ENCODE measurements at regions of chr16 and their contacts with region 1.

Region 1: DNA sequence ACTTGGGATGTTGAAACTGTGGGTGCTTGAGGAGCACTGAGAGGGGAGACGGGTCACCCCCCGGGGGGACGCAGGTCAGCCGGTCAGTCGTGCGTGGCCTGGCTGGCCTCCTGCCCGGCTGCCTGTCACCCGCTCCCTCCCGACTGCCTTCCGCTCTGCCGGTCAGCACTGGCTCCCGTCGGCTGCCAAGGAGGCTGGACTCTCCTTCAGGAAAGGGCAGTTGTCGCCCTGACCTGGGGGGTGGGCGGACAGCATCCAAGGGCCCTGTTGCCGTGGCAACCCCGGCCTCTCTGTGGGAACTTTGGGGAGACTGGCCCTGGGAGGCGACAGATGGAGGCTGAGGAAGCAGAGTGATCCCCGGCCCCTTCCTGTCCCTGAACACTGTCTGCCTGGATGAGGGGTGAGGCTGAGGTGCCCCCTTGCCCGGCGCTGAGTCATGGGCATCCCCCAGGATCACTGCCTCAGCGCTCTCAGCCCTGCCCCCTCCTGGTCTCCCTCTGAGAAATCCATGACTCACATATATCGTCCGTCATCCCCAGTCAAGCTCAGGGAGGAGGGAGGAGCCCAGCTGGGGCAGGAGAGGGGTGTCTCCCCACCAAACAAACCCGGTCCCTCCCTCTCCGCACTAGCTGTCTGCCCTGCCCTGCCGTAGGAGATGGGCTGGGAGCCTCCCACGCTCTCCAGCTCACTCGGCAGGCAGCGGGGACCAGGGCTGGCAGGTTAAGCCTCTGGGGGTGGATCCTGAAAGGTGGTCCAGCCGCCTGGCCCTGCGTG is at the start of gene ADGRG1:
- DNase-seq: peak; percentile 93 to 98 (median 98)
- H3K4me3 ChIP-seq: peak within 1 kb of the TSS; percentile 65 to 86 (median 81)
- H3K27ac ChIP-seq: peak within 1 kb of the TSS; percentile 68 to 83
- H3K4me1 ChIP-seq: peaks cover 3 to 90% (median 84%) of the 10 kb centered on the region in 4 experiments
- H3K27me3 ChIP-seq: no peaks in the 10 kb centered on the region

Region 2: GRCh38 chr16:57591086-57591869 is 36.9 kb before region 1 on chr16:
- CTCF ChIA-PET with region 1: interaction called, 55 read pairs
- POLR2A ChIA-PET with region 1: no interaction called
- DNase-seq: peak; percentile 73 to 85 (median 81)
- H3K4me3 ChIP-seq: peak overlapping the region in 1 of 7 experiments; percentile 14
- H3K27ac ChIP-seq: no peak overlapping the region
- H3K4me1 ChIP-seq: peaks cover 10 to 37% (median 34%) of the 10 kb centered on the region in 4 experiments
- H3K27me3 ChIP-seq: no peaks in the 10 kb centered on the region

Region 3: DNA sequence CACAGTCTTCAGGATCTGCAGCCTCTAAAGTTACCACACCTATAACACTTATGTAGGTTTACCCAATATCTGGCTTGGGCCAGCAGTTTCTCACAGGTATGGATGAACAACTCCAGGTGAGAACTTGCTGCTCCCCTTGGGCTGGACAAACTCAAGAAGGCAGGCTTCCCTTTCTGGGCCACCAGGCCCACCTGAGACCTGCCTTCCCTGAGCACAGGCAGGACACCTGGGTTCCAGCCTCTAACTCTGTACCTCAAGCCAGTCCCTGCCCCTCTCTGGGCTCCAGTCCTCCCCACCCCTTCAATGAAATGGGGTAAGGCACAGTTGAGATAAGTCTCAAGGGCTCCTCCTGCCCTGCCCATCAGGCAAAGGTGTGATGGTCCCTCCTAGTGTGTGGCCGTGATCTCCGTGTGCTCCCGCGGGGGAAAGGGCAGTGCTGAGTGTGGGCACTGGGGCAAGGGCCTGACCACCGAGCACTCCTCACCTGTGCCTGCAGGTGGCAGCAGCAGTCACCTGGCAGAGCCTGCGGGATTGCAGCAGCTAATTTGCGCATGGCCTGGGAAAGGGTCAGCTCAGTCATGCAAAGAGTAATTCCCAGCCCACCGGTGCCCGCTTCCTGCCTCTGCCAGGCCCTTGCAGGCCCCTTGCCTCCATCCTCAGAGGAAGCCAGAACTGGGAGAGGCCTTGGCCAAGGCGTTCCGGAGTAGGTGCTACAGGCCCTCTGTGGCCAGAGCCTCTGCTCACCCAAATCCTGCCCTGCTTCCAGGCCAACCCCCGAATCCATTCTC is 28.0 kb before region 1 on chr16:
- CTCF ChIA-PET with region 1: interaction called, 108 read pairs
- POLR2A ChIA-PET with region 1: interaction called, 5 read pairs
- DNase-seq: peak in 1 of 3 donors; percentile 48
- H3K4me3 ChIP-seq: no peak overlapping the region
- H3K27ac ChIP-seq: no peak overlapping the region
- H3K4me1 ChIP-seq: peaks cover 19 to 54% (median 50%) of the 10 kb centered on the region in 4 experiments
- H3K27me3 ChIP-seq: no peaks in the 10 kb centered on the region

Region 4: DNA sequence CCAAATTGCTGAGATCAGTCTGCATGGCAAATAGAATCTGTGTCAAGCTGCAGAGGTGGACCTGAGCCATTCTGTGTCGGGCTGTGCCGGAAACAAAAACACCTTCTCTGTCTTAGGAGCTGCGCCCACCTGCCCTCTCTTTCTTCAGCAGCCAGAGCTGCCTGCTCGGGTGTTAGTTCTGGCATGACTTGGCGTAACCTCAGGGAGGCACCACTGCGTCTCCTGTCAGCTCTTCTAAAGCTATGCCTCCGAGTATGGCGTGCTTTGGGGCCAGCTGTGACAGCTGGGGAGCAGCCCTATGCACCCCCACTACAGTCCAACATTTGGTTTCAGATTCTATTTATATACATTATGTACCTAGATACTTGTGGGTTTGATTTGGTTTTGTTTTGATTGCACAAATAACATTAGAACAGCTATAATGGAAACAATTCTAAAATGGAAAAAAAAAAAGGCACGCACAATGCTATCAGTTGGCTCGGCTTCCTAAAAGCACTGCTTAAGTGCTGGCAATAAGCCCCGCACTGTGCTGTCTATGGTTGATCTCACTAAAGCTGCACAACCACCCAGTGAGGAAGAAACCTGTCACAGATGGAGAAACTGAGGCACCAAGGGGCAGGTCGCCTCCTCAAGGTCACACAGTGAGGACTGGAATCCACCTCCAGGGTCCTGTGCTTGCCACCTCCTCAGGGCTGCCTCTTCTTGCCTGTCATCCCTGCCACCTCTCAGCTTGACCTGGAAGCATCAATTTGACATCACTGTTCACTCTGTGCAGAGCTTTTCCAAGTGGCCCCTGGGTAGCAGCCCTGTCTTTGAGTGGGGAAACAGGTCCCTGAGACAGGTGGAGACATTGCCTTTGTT is 18.4 kb before region 1 on chr16:
- CTCF ChIA-PET with region 1: interaction called, 108 read pairs
- POLR2A ChIA-PET with region 1: interaction called, 3 read pairs
- DNase-seq: peak in 2 of 3 donors; percentile 86 to 89
- H3K4me3 ChIP-seq: peak overlapping the region in 2 of 7 experiments; percentile 19 to 25
- H3K27ac ChIP-seq: no peak overlapping the region
- H3K4me1 ChIP-seq: peaks cover 17 to 70% (median 59%) of the 10 kb centered on the region in 4 experiments
- H3K27me3 ChIP-seq: no peaks in the 10 kb centered on the region

Measured in common myeloid progenitor, CD34-positive (primary cell).